IMR-90 (cell line): ENCODE measurements at regions of chr16 and their contacts with region 1.

Region 1: GRCh38 chr16:67100569-67101310 is 9.0 kb upstream of the PHAF1 start:
- DNase-seq: peak; percentile 56
- ATAC-seq: peak; percentile 63
- H3K4me3 ChIP-seq: no peak overlapping the region
- H3K27ac ChIP-seq: no peak overlapping the region
- H3K4me1 ChIP-seq: peaks cover 5% of the 10 kb centered on the region
- H3K27me3 ChIP-seq: no peaks in the 10 kb centered on the region
- CTCF ChIP-seq: peak; percentile 58
- POLR2A ChIP-seq: no peak
- RAD21 ChIP-seq: peak; percentile 58

Region 2: GRCh38 chr16:66977341-66978113 is 123.2 kb before region 1 on chr16:
- CTCF ChIA-PET with region 1: interaction called, 5 read pairs
- POLR2A ChIA-PET with region 1: no interaction called
- dilution Hi-C with region 1: no loop called
- in situ Hi-C with region 1: no loop called
- intact Hi-C with region 1: loop called (anchors 1 kb)
- DNase-seq: peak; percentile 79
- ATAC-seq: peak; percentile 97
- H3K4me3 ChIP-seq: no peak overlapping the region
- H3K27ac ChIP-seq: no peak overlapping the region
- H3K4me1 ChIP-seq: no peaks in the 10 kb centered on the region; the same call in 1 of the 2 replicates
- H3K27me3 ChIP-seq: no peaks in the 10 kb centered on the region; the same call in 1 of the 2 replicates
- CTCF ChIP-seq: peak; percentile 97
- POLR2A ChIP-seq: peak; percentile 60; the same call in 1 of the 2 replicates
- RAD21 ChIP-seq: peak; percentile 100

Region 3: DNA sequence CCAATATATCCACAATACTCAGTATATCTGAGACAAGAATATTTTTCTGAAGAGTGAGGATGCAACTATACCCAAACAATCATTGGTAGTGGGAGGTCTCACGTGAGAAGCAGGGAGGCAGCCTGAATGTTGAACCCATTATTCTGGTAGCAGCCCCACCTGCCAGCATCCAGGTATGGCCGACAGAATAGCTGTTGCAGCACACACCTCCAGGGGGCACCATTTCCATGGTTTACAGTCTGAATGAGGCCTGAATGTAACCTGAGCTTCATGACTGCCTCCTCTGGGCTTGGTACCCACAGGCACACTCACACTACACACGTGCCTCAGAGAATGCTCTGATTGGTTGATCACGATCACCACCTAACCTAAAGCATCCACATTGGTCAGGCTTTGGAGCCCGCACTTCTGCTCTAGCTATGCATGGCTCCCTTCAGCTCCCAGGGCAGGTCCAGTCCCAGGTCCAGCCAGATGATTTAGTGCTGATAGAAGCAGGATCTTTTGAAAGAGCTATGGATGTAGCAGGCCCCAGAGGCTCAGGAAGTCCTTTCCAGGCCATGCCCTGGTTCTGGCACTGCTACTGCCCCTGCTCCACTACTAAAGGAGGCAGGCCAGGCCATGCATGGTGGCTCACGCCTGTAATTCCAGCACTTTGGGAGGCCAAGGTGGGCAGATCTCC is 82.8 kb before region 1 on chr16:
- CTCF ChIA-PET with region 1: interaction called, 22 read pairs
- POLR2A ChIA-PET with region 1: no interaction called
- dilution Hi-C with region 1: no loop called
- in situ Hi-C with region 1: no loop called
- intact Hi-C with region 1: loop called (anchors 1 kb)
- DNase-seq: peak; percentile 95
- ATAC-seq: peak; percentile 75
- H3K4me3 ChIP-seq: no peak overlapping the region
- H3K27ac ChIP-seq: no peak overlapping the region
- H3K4me1 ChIP-seq: peaks cover 9% of the 10 kb centered on the region
- H3K27me3 ChIP-seq: peaks cover 2% of the 10 kb centered on the region; the same call in 1 of the 2 replicates
- CTCF ChIP-seq: peak; percentile 89
- POLR2A ChIP-seq: no peak
- RAD21 ChIP-seq: peak; percentile 91

Region 4: GRCh38 chr16:67112591-67113399 is 12.1 kb after region 1 on chr16:
- CTCF ChIA-PET with region 1: interaction called, 11 read pairs
- POLR2A ChIA-PET with region 1: no interaction called
- dilution Hi-C with region 1: no loop called
- in situ Hi-C with region 1: no loop called
- intact Hi-C with region 1: no loop called
- DNase-seq: no peak
- ATAC-seq: no peak
- H3K4me3 ChIP-seq: no peak overlapping the region
- H3K27ac ChIP-seq: no peak overlapping the region
- H3K4me1 ChIP-seq: peaks cover 19% of the 10 kb centered on the region
- H3K27me3 ChIP-seq: no peaks in the 10 kb centered on the region
- CTCF ChIP-seq: no peak
- POLR2A ChIP-seq: no peak
- RAD21 ChIP-seq: no peak